ENCODE measurements at regions of chr1 and their contacts with region 1.

Region 1: DNA sequence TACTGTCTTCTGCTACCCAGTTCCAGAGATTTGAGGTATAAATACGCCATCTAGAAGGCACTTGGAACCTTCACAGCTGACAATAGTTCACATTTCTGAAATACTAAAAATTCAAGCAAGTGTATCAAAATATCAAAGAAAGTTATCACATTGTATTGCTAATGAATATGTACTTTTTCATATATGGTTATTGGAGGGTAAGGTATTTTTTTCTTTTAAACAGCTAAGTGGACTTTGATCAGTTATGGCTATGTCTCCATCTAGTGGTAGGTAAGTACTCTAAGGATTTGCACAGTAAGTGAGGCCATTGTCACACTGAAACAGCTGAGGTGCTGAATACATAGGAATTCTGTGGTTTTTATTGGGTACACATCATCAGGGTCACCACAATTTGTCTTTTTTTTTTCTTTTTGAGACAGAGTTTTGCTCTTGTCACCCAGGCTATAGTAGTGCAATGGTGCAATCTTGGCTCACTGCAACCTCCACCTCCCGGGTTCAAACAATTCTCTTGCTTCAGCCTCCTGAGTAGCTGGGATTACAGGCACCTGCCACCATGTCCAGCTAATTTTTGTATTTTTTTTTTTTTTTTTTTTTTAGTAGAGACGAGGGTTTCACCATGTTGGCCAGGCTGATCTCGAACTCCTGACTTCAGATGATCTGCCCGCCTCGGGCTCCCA is 49.1 kb upstream of the CR2 start:
- DNase-seq: peak; percentile 62
- CTCF ChIP-seq: peak; percentile 68

Region 2: GRCh38 chr1:207084701-207085180 is 320.2 kb before region 1 on chr1:
- CTCF ChIA-PET with region 1: interaction called, 73 read pairs
- POLR2A ChIA-PET with region 1: no interaction called
- DNase-seq: peak; percentile 65
- CTCF ChIP-seq: peak; percentile 66

Region 3: DNA sequence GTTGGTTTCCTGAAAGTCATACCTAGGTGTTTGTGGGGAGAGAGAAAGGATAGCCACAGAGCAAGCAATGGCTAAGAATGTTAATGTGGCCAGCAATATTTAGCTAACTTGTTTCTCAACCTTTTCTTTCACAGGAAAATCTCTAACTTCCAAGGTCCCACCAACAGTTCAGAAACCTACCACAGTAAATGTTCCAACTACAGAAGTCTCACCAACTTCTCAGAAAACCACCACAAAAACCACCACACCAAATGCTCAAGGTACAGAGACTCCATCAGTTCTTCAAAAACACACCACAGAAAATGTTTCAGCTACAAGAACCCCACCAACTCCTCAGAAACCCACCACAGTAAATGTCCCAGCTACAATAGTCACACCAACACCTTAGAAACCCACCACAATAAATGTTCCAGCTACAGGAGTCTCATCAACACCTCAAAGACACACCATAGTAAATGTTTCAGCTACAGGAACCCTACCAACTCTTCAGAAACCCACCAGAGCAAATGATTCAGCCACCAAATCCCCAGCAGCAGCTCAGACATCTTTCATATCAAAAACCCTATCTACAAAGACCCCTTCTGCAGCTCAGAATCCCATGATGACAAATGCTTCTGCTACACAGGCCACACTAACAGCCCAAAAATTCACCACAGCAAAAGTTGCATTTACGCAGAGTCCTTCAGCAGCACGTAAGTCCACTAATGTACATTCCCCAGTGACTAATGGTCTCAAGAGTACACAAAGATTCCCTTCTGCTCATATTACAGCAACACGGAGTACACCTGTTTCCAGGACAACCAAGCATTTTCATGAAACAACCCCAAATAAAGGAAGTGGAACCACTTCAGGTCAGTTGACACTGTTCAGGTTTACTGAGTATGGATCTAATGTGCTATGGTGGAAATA is 68.2 kb before region 1 on chr1:
- CTCF ChIA-PET with region 1: interaction called, 13 read pairs
- POLR2A ChIA-PET with region 1: no interaction called
- DNase-seq: peak; percentile 41
- CTCF ChIP-seq: no peak

Region 4: GRCh38 chr1:207423560-207424292 is 18.7 kb after region 1 on chr1:
- CTCF ChIA-PET with region 1: interaction called, 34 read pairs
- POLR2A ChIA-PET with region 1: no interaction called
- DNase-seq: peak; percentile 27
- CTCF ChIP-seq: peak; percentile 23

Region 5: DNA sequence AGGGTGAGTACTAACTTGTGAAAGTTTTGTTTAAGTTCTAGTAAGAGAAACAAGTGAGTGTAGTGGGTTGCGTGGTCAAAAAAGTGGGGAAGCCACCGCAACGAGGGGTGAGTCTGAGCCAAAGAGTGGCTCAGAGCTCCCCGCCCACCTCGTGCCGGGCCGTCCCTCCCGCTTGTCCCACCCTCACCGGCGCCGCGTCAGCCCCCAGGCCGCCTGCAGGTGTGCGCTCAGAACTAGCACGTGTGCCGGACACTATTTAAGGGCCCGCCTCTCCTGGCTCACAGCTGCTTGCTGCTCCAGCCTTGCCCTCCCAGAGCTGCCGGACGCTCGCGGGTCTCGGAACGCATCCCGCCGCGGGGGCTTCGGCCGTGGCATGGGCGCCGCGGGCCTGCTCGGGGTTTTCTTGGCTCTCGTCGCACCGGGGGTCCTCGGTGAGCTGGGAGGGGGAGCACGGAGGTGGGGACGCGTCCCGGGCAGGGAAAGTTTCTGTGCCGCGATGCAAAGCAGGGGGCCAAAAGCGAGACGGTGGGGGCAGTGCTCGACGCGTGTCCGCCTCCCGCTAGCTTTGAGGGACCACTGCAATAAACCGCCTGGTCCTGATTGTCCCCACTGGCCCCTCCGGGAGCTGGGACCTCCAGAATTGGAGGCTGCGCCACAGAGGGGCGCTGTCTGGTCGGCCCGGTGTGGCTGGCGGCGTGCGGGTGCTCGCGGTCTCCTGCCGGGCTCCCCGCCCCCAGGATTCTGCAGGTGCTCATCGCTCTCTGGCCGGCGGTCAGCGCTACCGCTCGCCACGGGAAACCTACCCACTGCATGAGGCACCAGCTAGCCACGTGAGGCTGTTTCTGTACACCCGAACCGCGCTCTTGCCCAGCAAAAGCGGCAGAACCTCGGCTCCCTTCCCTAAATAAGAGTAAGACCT is 49.3 kb after region 1 on chr1 and contains the start of gene CR2:
- CTCF ChIA-PET with region 1: interaction called, 23 read pairs
- POLR2A ChIA-PET with region 1: no interaction called
- DNase-seq: peak; percentile 83
- CTCF ChIP-seq: peak; percentile 56

Measured in GM10248 (cell line).